ENCODE measurements at regions of chr10 and their contacts with region 1.

Region 1: GRCh38 chr10:43078987-43079275 is 2.1 kb downstream of the RET start:
- DNase-seq: peak; percentile 62 to 76 (median 75)
- ATAC-seq: peak; percentile 80
- H3K4me3 ChIP-seq: no peak overlapping the region
- H3K27ac ChIP-seq: no peak overlapping the region
- H3K4me1 ChIP-seq: peaks cover 0 to 26% of the 10 kb centered on the region in 2 experiments; a peak in 2 of 5 replicates
- H3K27me3 ChIP-seq: peaks cover 0 to 34% of the 10 kb centered on the region in 2 experiments; a peak in 2 of 5 replicates
- CTCF ChIP-seq: peak; percentile 63 to 81 (median 72)
- EP300 ChIP-seq: no peak
- POLR2A ChIP-seq: no peak
- RAD21 ChIP-seq: peak; percentile 17 to 70; a peak in 3 of 4 replicates

Region 2: DNA sequence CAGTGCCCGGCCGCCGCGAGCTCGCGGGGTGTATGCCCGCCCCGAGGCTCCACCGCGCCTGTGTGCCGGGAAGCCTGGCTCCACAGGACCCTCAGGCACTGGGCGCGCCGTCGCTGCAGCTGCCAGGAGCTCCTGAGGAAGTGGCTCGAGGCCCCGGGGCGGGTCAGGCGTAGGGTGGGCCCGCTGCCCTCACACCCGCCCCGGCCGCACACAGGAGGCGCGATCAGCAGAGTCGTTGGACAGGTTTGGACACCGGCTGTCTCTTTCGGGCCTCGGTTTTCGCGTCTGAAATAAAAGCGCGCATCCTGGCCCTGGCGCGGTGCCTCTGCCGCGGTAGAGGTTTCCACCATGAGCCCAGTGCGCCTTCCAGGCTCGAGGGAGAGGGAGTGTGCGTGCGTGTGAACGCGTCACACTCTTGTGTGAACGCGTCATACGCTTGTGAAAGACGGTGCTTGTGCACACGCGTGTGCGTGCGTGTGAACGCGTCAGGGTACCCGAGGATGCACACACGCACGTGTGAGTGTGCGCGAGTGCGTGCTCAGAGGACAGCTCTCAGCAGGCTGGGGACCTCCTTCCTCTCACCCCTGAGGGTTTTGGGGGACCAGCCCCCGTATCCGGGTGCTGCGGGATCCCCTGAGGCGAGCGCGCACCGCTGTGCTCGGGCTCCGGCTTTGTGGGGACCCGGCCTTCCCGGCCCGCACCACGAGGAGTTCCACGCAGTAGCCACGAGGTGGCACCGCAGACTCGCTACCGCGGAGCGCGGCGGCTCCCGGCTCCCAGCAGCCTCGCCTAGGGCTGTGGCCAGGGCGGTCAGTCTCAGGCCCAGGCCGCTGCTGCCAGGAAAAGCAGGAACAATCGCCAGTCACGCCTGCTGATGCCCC is 212.6 kb before region 1 on chr10:
- CTCF ChIA-PET with region 1: no interaction called
- POLR2A ChIA-PET with region 1: no interaction called
- in situ Hi-C with region 1: no loop called
- intact Hi-C with region 1: loop called (anchors 2 kb)
- DNase-seq: peak; percentile 79 to 84 (median 80)
- ATAC-seq: peak; percentile 100
- H3K4me3 ChIP-seq: no peak overlapping the region
- H3K27ac ChIP-seq: no peak overlapping the region
- H3K4me1 ChIP-seq: peaks cover 0 to 12% of the 10 kb centered on the region in 2 experiments; a peak in 3 of 5 replicates
- H3K27me3 ChIP-seq: peaks cover 10 to 36% of the 10 kb centered on the region in 2 experiments; a peak in 3 of 5 replicates
- CTCF ChIP-seq: peak; percentile 61 to 88 (median 77)
- EP300 ChIP-seq: no peak
- POLR2A ChIP-seq: no peak
- RAD21 ChIP-seq: peak; percentile 87 to 95

Region 3: GRCh38 chr10:42988517-42989395 is 90.2 kb before region 1 on chr10:
- CTCF ChIA-PET with region 1: no interaction called
- POLR2A ChIA-PET with region 1: no interaction called
- in situ Hi-C with region 1: no loop called
- intact Hi-C with region 1: loop called (anchors 10 kb)
- DNase-seq: peak; percentile 45 to 54 (median 52)
- ATAC-seq: peak; percentile 73
- H3K4me3 ChIP-seq: no peak overlapping the region
- H3K27ac ChIP-seq: no peak overlapping the region
- H3K4me1 ChIP-seq: peaks cover 7 to 21% of the 10 kb centered on the region in 2 experiments; a peak in 3 of 5 replicates
- H3K27me3 ChIP-seq: peaks cover 4 to 48% of the 10 kb centered on the region in 2 experiments; a peak in 3 of 5 replicates
- CTCF ChIP-seq: no peak
- EP300 ChIP-seq: no peak
- POLR2A ChIP-seq: no peak
- RAD21 ChIP-seq: no peak

Region 4: DNA sequence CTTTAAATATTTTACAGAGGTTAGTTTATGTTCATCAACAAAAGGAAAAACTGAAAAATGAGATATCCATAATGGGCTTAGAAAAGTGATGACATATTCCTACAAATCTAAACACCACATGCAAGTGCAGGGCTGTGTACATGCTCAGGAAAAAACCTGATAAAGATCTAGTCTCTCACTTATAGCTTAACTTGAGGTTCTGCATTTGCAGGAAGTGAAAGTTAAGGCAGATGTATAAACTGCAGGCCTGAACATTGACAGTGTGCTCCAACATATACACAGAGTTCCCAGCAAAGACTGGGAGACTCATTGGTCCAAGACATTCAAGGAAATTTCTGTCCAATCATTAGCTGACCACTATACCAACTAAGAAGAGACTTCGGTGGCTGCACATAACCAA is 65.9 kb before region 1 on chr10:
- CTCF ChIA-PET with region 1: no interaction called
- POLR2A ChIA-PET with region 1: no interaction called
- in situ Hi-C with region 1: no loop called
- intact Hi-C with region 1: loop called (anchors 10 kb)
- DNase-seq: no peak
- ATAC-seq: no peak
- H3K4me3 ChIP-seq: no peak overlapping the region
- H3K27ac ChIP-seq: no peak overlapping the region
- H3K4me1 ChIP-seq: no peaks in the 10 kb centered on the region
- H3K27me3 ChIP-seq: no peaks in the 10 kb centered on the region; a peak in 1 of 5 replicates
- CTCF ChIP-seq: no peak
- EP300 ChIP-seq: no peak
- POLR2A ChIP-seq: no peak
- RAD21 ChIP-seq: no peak

Region 5: DNA sequence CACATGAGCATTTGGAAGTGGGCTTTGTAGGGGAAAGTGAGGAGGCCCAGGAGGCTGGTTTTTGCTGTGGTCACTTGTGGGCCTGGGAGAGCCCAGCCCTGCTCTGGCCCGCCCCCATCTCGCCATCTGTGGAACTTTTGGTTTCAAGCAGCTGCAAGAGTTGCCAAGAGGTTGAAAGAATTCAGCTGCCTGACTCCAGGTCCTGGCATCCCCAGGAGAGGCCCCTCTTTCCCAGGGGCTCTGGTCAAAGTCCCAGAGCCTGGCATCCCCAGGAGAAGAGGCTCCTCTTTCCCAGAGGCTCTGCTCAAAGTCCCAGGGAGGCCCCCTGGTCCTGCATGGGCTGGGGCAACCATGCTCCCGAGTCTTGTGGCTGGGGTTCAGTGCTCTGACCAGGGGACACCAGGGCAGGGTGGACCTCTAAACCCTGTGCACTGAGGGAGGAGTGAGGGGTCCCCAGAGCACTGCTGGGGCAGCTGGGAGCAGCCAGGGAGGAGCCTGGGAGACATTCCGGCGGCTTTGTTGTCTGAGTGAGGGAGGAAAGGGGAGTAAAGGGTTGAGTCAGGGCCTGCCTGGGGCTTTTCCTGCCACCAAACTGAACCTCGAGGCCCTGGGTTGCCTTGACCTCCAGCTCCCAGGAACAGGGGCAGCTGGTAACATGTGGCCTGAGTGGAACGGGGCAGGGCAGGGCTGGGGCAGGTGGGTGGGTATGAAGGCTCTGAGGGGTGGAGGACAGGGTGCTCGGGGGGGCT is 31.6 kb after region 1 on chr10:
- CTCF ChIA-PET with region 1: interaction called, 3 read pairs
- POLR2A ChIA-PET with region 1: no interaction called
- in situ Hi-C with region 1: no loop called
- intact Hi-C with region 1: loop called (anchors 5 kb)
- DNase-seq: no peak
- ATAC-seq: no peak
- H3K4me3 ChIP-seq: no peak overlapping the region
- H3K27ac ChIP-seq: no peak overlapping the region
- H3K4me1 ChIP-seq: peaks cover 0 to 25% of the 10 kb centered on the region in 2 experiments; a peak in 3 of 5 replicates
- H3K27me3 ChIP-seq: peaks cover 16 to 50% of the 10 kb centered on the region in 2 experiments; a peak in 4 of 5 replicates
- CTCF ChIP-seq: no peak
- EP300 ChIP-seq: no peak
- POLR2A ChIP-seq: no peak
- RAD21 ChIP-seq: no peak